ENCODE measurements at regions of chr7 and their contacts with region 1.

Region 1: GRCh38 chr7:74656837-74657691 is 454 bp upstream of the GTF2I start:
- DNase-seq: peak; percentile 97 to 98
- ATAC-seq: peak; percentile 70 to 72
- H3K4me3 ChIP-seq: peak overlapping the region; percentile 66 to 100 (median 86)
- H3K27ac ChIP-seq: peak overlapping the region; percentile 97 to 100 (median 99)
- H3K4me1 ChIP-seq: peaks cover 41 to 43% of the 10 kb centered on the region in 2 donors
- H3K27me3 ChIP-seq: no peaks in the 10 kb centered on the region
- CTCF ChIP-seq: peak in 1 of 5 experiments; percentile 13
- POLR2A ChIP-seq: peak; percentile 46 to 64

Region 2: DNA sequence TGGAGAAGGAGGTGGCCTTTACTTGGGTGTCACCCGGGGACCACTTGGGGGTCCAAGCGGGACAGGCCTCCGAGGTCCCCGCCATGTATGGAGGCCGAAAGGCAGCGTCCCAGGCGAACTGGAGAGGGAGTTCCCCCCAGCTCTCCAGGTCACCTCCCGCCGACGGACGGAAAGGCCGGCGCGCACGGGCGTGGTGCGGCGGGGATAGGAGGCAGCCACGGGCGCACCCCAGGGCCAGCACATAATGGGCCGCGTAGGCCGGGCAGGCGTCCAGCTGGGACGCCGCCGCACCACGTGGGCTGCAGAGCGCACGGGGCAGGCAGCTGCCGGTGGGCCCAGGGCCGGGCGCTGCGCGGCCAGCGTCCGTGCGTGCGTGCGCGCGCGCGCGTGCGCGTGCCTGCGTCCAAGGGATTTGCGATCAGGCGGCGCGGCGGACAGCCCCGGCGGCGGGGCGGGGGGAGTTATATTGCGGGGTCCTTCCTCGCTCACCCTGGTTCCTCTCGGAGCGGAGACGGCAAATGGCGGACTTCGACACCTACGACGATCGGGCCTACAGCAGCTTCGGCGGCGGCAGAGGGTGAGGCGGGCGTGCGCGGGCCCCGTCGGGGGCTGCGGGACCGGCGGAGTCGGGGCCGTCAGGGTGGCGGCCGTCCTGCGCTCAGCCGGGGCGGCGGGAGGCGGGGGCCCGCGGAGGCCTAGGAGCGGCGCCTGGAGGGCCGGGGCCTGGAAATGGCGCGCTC is 483.0 kb before region 1 on chr7 and contains the start of gene EIF4H:
- in situ Hi-C with region 1: loop called in 1 of 4 experiments (anchors 25 kb)
- intact Hi-C with region 1: no loop called
- DNase-seq: peak; percentile 95 to 96
- ATAC-seq: peak; percentile 87 to 90
- H3K4me3 ChIP-seq: peak within 1 kb of the TSS; percentile 91 to 93 (median 92)
- H3K27ac ChIP-seq: peak within 1 kb of the TSS; percentile 94 to 99 (median 95)
- H3K4me1 ChIP-seq: peaks cover 44 to 48% of the 10 kb centered on the region in 2 donors
- H3K27me3 ChIP-seq: no peaks in the 10 kb centered on the region
- CTCF ChIP-seq: peak in 1 of 5 experiments; percentile 42
- POLR2A ChIP-seq: peak; percentile 97
- total RNA-seq, gene EIF4H: 247 to 430 (median 309) TPM

Region 3: GRCh38 chr7:74455291-74455804 is 201.7 kb before region 1 on chr7:
- in situ Hi-C with region 1: no loop called
- intact Hi-C with region 1: loop called (anchors 5 kb)
- DNase-seq: peak; percentile 79 to 91
- ATAC-seq: peak; percentile 59 to 62
- H3K4me3 ChIP-seq: peak overlapping the region; percentile 62 to 96 (median 83)
- H3K27ac ChIP-seq: peak overlapping the region; percentile 93 to 100 (median 100)
- H3K4me1 ChIP-seq: peaks cover 41 to 46% of the 10 kb centered on the region in 2 donors
- H3K27me3 ChIP-seq: no peaks in the 10 kb centered on the region
- CTCF ChIP-seq: no peak
- POLR2A ChIP-seq: peak; percentile 92 to 95

Region 4: DNA sequence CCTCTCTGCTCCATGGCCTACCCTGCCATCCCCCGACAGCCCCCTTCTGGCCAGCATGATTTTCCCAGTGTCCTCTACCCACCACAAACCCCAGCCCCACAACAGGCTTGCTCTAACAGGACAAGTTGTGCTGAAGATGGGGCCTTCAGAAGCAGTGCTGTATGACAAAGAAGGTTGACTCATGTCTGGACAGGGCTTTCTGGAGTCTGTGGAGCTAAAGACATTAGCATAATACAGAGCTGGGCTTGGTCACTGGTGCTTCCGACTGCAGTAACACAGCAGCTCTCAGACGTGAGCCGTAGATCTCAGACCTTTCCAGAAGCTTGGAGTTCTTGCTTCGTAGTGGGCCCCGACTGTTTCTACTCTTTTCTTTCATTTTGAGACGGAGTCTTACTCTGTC is 102.9 kb before region 1 on chr7:
- in situ Hi-C with region 1: no loop called
- intact Hi-C with region 1: loop called (anchors 10 kb)
- DNase-seq: no peak
- ATAC-seq: peak; percentile 14 to 55
- H3K4me3 ChIP-seq: no peak overlapping the region
- H3K27ac ChIP-seq: peak overlapping the region; percentile 89 to 90 (median 89)
- H3K4me1 ChIP-seq: peaks cover 12 to 15% of the 10 kb centered on the region in 2 donors
- H3K27me3 ChIP-seq: no peaks in the 10 kb centered on the region
- CTCF ChIP-seq: no peak
- POLR2A ChIP-seq: no peak

Region 5: DNA sequence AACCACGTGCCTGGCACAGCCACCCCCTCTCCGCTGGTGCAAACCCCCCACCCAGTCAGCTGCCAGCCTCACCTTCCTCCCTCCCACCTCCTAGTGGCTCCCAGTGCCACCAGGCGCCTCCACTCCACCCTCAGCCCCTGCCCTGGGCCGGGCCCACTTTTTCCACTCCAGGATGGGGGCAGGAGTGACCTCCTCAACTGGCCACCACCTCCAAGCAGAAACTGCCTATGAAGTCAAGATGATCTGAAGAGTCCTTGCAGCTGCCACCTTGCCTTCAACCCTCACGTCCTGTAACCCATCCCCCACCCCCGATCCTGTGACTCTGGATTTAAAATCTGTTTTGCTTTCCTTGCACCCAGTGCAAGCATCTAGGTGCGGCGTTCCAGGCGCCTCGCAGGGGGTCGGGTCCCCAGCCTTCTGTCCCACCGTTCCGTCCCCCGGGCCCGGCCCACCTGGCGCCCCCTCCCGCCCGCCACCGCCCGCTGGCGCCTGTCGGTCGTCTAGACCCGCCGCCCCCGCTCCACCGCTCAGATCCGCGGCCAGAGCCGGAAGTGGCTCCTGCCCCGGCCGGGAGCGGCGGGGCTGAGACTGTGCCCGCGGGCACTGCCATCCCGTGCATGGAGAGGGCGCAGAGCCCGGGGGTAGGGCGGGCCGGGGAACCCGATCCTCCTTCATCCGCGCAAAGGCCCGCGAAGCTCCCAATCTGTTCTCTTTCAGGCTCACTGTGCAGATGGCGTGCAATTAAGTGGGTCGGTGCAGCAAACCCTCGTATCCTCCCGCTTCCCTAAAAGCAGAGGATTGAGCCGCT is 50.8 kb before region 1 on chr7:
- in situ Hi-C with region 1: no loop called
- intact Hi-C with region 1: loop called (anchors 5 kb)
- DNase-seq: peak; percentile 24 to 70
- ATAC-seq: peak; percentile 24 to 52
- H3K4me3 ChIP-seq: peak overlapping the region; percentile 45 to 60 (median 52)
- H3K27ac ChIP-seq: peak overlapping the region; percentile 70 to 88 (median 82)
- H3K4me1 ChIP-seq: peaks cover 14 to 16% of the 10 kb centered on the region in 2 donors
- H3K27me3 ChIP-seq: no peaks in the 10 kb centered on the region
- CTCF ChIP-seq: peak in 1 of 5 experiments; percentile 20
- POLR2A ChIP-seq: no peak

Region 6: DNA sequence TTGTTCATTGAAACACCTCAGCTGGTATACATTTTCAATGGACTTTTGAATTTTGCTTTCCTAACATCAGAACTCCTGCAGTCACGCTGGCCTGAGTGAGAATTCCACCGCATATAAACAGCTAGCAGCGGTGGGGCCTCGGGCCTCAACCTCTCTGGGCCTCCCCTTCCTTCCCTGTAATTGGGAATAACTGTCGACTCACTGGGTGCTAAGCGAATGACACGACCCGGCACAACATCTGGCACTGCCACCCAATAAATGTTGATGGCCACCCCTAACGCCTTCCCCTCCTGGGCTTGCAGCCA is 415.9 kb after region 1 on chr7:
- in situ Hi-C with region 1: no loop called
- intact Hi-C with region 1: no loop called
- DNase-seq: peak in 1 of 2 donors; percentile 39
- ATAC-seq: peak; percentile 5 to 8
- H3K4me3 ChIP-seq: peak overlapping the region; percentile 67 to 90 (median 85)
- H3K27ac ChIP-seq: peak overlapping the region; percentile 87 to 95 (median 92)
- H3K4me1 ChIP-seq: peaks cover 10 to 12% of the 10 kb centered on the region in 2 donors
- H3K27me3 ChIP-seq: no peaks in the 10 kb centered on the region
- CTCF ChIP-seq: no peak
- POLR2A ChIP-seq: no peak